T-cell (primary cell): ENCODE measurements at regions of chr6 and their contacts with region 1.

Region 1: DNA sequence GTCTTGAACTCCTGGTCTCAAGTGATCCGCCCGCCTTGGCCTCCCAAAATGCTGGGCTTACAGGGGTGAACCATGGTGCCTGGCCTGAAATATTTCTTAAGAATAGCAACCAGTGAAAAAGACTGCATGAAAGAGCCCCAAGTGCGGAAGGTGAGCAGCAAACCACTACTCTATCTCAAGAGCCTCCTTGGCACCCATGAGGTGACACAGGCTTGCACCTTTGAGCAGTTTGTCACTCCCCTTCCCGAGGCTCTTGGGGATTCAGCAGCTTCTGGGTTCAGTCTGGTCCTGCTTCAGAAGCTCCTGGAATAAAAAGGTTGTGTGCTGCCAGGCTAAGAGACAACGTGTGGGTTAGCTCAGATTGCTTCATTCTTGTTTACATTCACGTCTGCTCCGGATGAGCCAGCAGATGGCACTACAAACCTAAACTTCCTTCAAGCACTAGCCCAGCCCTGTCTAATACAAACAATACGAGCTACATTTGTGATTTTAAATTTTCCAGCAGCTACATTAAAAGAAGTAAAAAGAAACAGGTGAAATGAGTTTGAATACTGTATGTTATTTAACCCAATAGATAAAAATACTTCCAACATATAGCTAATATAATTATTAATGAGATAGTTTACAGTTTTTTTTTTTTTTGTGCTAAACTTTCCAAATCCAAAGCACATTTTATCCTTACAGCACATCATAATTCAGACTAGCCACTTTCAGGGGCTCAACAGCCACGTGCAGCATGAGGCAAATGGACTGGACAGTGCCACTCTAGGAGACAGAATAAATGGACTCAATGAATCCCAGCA is 46.2 kb downstream of the GJA10 start:
- DNase-seq: peak; percentile 40 to 87 (median 69)
- ATAC-seq: peak; percentile 80 to 93 (median 88)
- H3K4me3 ChIP-seq: no peak overlapping the region
- H3K4me3 Mint-ChIP-seq: no peak overlapping the region
- H3K27ac ChIP-seq: no peak overlapping the region
- H3K27ac Mint-ChIP-seq: peak overlapping the region; percentile 3 to 86
- H3K4me1 ChIP-seq: peaks cover 3 to 11% of the 10 kb centered on the region in 2 experiments
- H3K4me1 Mint-ChIP-seq: peaks cover 26 to 43% (median 39%) of the 10 kb centered on the region in 3 donors
- H3K27me3 ChIP-seq: no peaks in the 10 kb centered on the region
- H3K27me3 Mint-ChIP-seq: no peaks in the 10 kb centered on the region

Region 2: GRCh38 chr6:89952686-89953085 is 12.3 kb after region 1 on chr6:
- CTCF ChIA-PET with region 1: interaction called, 6 to 27 read pairs
- POLR2A ChIA-PET with region 1: interaction called, 3 read pairs
- DNase-seq: peak in 34 of 35 experiments; percentile 40 to 88 (median 66)
- ATAC-seq: peak; percentile 97 to 99 (median 98)
- H3K4me3 ChIP-seq: no peak overlapping the region
- H3K4me3 Mint-ChIP-seq: peak overlapping the region; percentile 37 to 64 (median 41)
- H3K27ac ChIP-seq: peak overlapping the region; percentile 21
- H3K27ac Mint-ChIP-seq: peak overlapping the region; percentile 69 to 84
- H3K4me1 ChIP-seq: peaks cover 43 to 47% of the 10 kb centered on the region in 2 experiments
- H3K4me1 Mint-ChIP-seq: peaks cover 64 to 69% (median 68%) of the 10 kb centered on the region in 3 donors
- H3K27me3 ChIP-seq: no peaks in the 10 kb centered on the region
- H3K27me3 Mint-ChIP-seq: no peaks in the 10 kb centered on the region

Region 3: DNA sequence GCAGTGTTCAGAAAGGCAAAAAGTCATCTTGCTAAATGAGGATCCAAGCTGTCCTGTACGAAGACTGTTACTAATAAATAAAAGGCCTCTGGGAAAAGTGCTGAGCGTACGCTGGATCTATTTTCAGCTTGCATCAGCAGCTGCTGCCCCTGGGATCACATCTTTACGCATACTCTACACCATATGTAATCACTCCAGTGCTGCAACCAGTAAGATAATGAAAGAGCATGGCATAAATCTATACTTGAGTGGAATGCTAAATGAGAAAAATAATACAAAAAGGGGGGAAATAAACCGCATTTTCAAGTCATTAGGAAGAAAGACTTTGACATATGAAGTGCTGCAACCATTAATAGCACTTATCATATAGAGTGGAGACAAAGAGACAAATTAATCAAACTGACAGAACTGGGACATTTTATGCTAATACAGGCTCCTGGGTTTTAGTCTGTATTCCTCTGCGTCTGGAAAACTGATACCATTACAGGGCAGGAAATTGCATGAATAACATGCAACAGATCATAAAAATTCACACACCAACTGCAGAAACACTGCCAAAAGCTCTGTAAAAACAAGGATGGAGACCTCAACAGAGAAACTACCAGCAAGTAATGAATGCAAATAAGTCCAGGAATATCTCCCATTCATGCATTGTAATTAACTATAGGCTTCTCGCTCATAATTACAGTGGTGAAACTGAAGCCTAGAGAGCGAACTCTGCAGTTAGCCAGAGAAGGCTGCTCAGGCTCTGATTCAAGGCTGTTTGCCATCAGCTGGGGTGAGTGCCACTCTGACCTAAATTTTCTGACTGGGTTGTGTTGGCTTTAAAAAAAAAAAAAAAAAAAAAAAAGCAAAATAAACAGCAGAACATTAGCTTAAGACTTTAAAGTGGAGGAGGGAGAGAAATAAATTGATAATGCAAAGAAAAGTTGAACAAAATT is 37.7 kb after region 1 on chr6:
- CTCF ChIA-PET with region 1: interaction called in 1 of 2 experiments, 11 read pairs
- POLR2A ChIA-PET with region 1: interaction called in 1 of 2 experiments, 4 read pairs
- DNase-seq: no peak
- ATAC-seq: no peak
- H3K4me3 ChIP-seq: no peak overlapping the region
- H3K4me3 Mint-ChIP-seq: no peak overlapping the region
- H3K27ac ChIP-seq: no peak overlapping the region
- H3K27ac Mint-ChIP-seq: no peak overlapping the region
- H3K4me1 ChIP-seq: peaks cover 2 to 4% of the 10 kb centered on the region in 2 experiments
- H3K4me1 Mint-ChIP-seq: peaks cover 33 to 40% (median 39%) of the 10 kb centered on the region in 3 donors
- H3K27me3 ChIP-seq: no peaks in the 10 kb centered on the region
- H3K27me3 Mint-ChIP-seq: no peaks in the 10 kb centered on the region

Region 4: DNA sequence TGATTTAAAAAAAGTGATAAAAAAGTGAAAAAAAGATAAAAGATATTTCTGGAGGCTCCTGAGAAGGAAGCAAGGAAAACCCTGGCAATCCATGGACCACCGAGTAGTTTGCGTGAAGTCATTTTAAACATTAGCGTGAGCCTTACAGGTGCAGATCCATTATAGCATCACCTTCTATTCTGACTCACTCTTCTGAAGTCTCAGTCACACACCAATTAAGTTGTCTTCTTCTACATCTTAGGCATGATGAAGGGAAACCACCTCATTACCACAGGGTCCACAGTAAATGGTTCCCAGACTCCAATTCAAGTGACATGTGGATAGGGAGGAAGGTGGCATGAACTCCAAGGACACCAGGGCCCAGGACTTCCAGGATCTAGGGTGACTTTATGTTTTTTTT is 53.0 kb after region 1 on chr6:
- CTCF ChIA-PET with region 1: no interaction called
- POLR2A ChIA-PET with region 1: no interaction called
- DNase-seq: no peak
- ATAC-seq: no peak
- H3K4me3 ChIP-seq: no peak overlapping the region
- H3K4me3 Mint-ChIP-seq: no peak overlapping the region
- H3K27ac ChIP-seq: no peak overlapping the region
- H3K27ac Mint-ChIP-seq: no peak overlapping the region
- H3K4me1 ChIP-seq: peaks cover 0 to 9% of the 10 kb centered on the region in 2 experiments
- H3K4me1 Mint-ChIP-seq: peaks cover 64 to 74% (median 64%) of the 10 kb centered on the region in 3 donors
- H3K27me3 ChIP-seq: no peaks in the 10 kb centered on the region
- H3K27me3 Mint-ChIP-seq: no peaks in the 10 kb centered on the region

Region 5: DNA sequence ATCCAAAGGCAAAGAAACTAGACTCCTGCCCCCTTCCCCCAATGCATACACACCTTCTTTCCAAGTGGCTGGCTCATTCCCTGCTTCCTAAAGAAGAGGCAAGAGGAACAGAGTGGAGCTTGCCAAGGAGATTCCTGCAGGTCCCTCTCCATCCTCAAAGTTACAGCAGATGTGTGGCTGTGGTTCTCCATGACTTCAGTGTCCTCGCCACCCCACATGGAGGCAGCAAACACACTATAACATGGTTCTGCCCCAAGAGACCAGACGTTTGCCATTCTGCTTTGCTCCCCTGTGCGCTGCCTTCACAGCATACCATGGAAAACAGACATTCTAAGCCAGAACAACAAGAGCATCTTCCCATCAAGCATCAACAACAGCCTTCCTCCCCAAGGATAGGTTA is 271.8 kb after region 1 on chr6:
- CTCF ChIA-PET with region 1: interaction called in 1 of 2 experiments, 11 read pairs
- POLR2A ChIA-PET with region 1: no interaction called
- DNase-seq: peak in 17 of 35 experiments; percentile 24 to 55 (median 35)
- ATAC-seq: peak; percentile 32 to 53 (median 43)
- H3K4me3 ChIP-seq: no peak overlapping the region
- H3K4me3 Mint-ChIP-seq: peak overlapping the region in 1 of 3 donors; percentile 15
- H3K27ac ChIP-seq: no peak overlapping the region
- H3K27ac Mint-ChIP-seq: peak overlapping the region in 1 of 2 donors; percentile 75
- H3K4me1 ChIP-seq: peaks cover 42 to 77% of the 10 kb centered on the region in 2 experiments
- H3K4me1 Mint-ChIP-seq: peaks cover 61 to 67% (median 65%) of the 10 kb centered on the region in 3 donors
- H3K27me3 ChIP-seq: no peaks in the 10 kb centered on the region
- H3K27me3 Mint-ChIP-seq: no peaks in the 10 kb centered on the region

Region 6: DNA sequence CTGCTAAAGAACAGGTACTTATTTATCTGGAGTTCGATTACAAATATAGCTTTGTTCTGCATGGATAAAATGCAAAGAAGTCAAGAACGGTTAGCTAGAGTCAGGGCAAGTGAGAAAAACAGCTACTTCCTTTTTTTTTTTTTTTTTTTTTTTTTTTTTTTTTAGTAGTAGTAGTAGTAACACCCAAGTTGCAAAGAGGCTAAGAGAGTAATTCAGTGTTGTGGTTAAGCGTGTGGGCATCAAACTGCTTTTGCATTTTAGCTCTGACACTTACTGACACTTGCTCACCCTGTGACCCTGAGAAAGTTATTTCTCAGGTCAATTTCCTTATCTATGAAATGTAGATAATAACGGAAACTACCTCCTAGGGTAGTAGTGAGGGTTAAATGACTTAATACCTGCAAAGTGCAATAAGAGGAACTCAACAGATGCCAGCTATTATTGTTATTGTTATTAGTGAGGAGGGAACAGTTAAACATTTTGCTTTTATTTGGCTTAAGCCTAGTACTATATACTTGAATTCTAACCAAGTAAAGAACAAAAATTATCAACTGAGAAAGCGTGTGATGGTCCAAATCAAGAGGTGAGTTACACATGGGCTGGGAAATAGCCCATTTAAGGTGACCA is 442.9 kb after region 1 on chr6:
- CTCF ChIA-PET with region 1: interaction called in 1 of 2 experiments, 11 read pairs
- POLR2A ChIA-PET with region 1: no interaction called
- DNase-seq: peak in 2 of 35 experiments; percentile 6 to 50
- ATAC-seq: peak; percentile 34 to 68 (median 64)
- H3K4me3 ChIP-seq: no peak overlapping the region
- H3K4me3 Mint-ChIP-seq: peak overlapping the region in 1 of 3 donors; percentile 45
- H3K27ac ChIP-seq: no peak overlapping the region
- H3K27ac Mint-ChIP-seq: peak overlapping the region; percentile 23 to 30
- H3K4me1 ChIP-seq: peaks cover 4 to 13% of the 10 kb centered on the region in 2 experiments
- H3K4me1 Mint-ChIP-seq: peaks cover 22 to 35% (median 25%) of the 10 kb centered on the region in 3 donors
- H3K27me3 ChIP-seq: no peaks in the 10 kb centered on the region
- H3K27me3 Mint-ChIP-seq: no peaks in the 10 kb centered on the region

Region 7: GRCh38 chr6:90478789-90479602 is 538.6 kb after region 1 on chr6:
- CTCF ChIA-PET with region 1: interaction called, 29 to 198 read pairs
- POLR2A ChIA-PET with region 1: interaction called, 6 to 8 read pairs
- DNase-seq: peak; percentile 59 to 91 (median 71)
- ATAC-seq: peak; percentile 98 to 99 (median 99)
- H3K4me3 ChIP-seq: no peak overlapping the region
- H3K4me3 Mint-ChIP-seq: peak overlapping the region in 1 of 3 donors; percentile 26
- H3K27ac ChIP-seq: no peak overlapping the region
- H3K27ac Mint-ChIP-seq: peak overlapping the region; percentile 31 to 84
- H3K4me1 ChIP-seq: peaks cover 2 to 10% of the 10 kb centered on the region in 2 experiments
- H3K4me1 Mint-ChIP-seq: peaks cover 25 to 41% (median 40%) of the 10 kb centered on the region in 3 donors
- H3K27me3 ChIP-seq: no peaks in the 10 kb centered on the region
- H3K27me3 Mint-ChIP-seq: no peaks in the 10 kb centered on the region